ENCODE measurements at regions of chr9 and their contacts with region 1.

Region 1: GRCh38 chr9:37592108-37592951 is at the start of gene TOMM5:
- DNase-seq: peak; percentile 89
- H3K4me3 Mint-ChIP-seq: peak within 1 kb of the TSS; percentile 94
- H3K27ac Mint-ChIP-seq: peak within 1 kb of the TSS; percentile 96
- H3K4me1 Mint-ChIP-seq: peaks cover 29% of the 10 kb centered on the region
- H3K27me3 Mint-ChIP-seq: peaks cover 8% of the 10 kb centered on the region
- total RNA-seq, gene TOMM5: 174 and 175 TPM in 2 replicates

Region 2: DNA sequence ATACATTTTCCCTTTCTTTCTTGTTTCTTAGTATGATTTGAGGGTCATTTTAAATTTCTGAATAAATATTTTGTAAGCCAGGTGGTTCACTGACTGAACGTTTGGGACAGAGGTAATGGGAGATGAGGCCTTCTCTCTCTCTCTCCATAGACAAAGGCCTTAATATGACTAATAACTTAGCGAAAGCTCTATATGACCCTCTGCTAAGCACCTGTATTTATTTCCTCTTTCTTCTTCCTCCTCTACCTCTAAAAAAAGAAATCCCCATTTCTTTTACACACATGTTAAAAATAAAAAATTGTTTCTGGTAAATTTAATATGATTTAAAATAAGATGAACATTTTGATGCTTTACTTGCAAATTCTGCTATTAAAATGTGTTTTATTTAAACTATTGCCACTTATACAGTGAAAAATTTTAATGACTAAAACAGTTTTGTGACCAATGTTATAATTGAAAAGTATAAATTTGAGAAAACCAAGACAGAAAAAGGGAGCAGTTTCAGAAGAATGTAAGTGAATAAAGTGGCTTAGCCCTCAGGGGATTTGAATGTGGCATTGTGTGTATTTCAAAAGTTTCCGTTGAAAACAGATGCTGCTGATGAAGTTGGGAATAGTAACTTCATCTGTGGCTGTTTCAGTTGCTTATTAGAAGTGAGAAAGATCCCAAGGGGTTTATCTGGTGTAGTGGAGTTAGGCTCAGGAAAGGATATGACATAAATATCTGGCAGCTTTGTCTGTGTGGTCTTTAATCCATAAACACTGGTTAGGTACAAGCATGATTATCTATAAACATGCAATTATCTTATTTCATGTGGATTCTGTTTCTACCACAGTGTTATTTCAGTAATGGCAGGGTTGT is 298.4 kb before region 1 on chr9:
- intact Hi-C with region 1: no loop called
- DNase-seq: no peak
- H3K4me3 Mint-ChIP-seq: no peak overlapping the region
- H3K27ac Mint-ChIP-seq: no peak overlapping the region
- H3K4me1 Mint-ChIP-seq: peaks cover 43% of the 10 kb centered on the region
- H3K27me3 Mint-ChIP-seq: no peaks in the 10 kb centered on the region

Region 3: GRCh38 chr9:37415011-37415719 is 177.2 kb before region 1 on chr9:
- intact Hi-C with region 1: loop called (anchors 1 kb)
- DNase-seq: peak; percentile 69
- H3K4me3 Mint-ChIP-seq: peak overlapping the region; percentile 23
- H3K27ac Mint-ChIP-seq: no peak overlapping the region
- H3K4me1 Mint-ChIP-seq: peaks cover 12% of the 10 kb centered on the region
- H3K27me3 Mint-ChIP-seq: peaks cover 4% of the 10 kb centered on the region

Region 4: DNA sequence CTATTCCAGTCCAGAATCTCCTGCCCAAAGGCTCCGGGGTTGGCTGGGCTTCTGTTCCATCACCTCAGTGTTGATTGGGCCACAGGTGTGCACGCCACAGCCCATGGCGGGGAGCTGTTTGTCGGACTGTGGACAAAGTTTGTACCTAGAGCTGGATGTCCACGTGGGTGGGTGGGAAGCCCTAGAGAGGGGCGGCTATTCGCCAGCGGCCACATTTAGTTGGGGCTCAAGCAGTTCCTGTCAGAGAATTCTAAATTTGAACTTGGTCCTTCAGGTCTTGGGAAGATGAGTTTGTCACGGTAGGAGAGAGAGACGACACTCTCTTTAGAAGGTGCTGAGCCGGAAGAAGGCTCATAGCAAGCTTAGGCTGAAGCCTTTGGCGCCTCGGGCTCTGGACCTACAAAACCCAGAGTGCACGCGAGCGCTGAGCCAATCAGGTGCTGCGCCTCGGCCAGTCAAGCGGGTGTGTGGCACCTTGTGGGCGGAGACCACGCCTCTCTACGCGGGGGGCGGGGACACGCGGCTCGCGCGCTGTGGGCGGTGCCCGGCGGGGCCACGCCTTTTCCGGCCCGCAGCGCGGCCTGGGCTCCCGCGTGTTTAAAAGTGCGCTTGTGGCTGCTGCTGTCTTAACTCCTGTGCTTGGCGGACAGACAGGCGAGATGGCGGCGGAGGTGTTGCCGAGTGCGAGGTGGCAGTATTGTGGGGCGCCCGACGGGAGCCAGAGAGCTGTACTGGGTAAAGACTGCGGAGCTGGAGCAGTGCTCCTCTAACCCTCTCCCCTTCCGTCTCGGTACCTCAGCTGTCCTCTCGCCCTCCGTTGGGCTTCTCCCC is 106.7 kb before region 1 on chr9 and contains the start of gene POLR1E:
- intact Hi-C with region 1: loop called (anchors 1 kb)
- DNase-seq: peak; percentile 95
- H3K4me3 Mint-ChIP-seq: peak within 1 kb of the TSS; percentile 96
- H3K27ac Mint-ChIP-seq: peak within 1 kb of the TSS; percentile 92
- H3K4me1 Mint-ChIP-seq: peaks cover 31% of the 10 kb centered on the region
- H3K27me3 Mint-ChIP-seq: peaks cover 8% of the 10 kb centered on the region
- total RNA-seq, gene POLR1E: 59.8 and 61.0 TPM in 2 replicates

Region 5: DNA sequence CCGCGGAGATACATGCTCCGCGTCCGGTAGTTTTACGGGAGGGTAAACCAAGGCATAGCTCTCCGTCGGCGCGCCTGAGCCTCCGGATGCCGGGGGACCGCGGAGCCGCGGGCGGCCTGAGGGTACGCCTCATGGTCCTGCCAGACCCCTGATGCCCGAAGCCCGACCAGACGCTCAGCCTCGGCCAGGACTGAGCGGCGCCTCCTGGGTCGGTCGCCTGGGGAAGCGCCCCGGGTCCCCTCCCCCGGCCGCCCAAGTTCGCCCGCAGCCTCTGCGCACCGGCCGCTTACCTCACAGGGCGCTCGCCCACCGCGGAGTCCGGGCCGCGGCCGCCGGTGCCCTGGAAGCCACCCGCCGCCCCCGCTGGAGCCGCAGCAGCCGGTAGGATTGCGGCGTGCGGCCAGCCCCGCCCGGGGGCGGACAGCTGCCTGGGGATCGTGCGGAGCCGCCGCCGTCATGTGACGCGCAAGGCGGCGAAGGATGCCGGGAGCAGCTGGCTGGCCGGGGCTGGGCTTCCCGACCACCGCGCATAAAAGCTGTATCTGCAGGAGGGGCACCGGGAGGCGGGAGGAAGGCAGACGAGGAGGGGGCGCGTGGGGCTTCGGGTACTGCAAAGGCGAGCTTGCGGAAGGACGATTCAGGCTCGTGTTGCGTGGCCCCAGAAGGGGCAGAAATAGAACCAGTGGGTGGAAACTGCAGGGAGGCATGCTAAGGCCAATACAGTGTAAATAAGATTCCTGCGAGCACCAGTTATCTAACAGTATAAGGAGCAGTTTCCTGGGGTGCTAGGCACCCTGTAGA is 16.2 kb before region 1 on chr9 and contains the start of gene FBXO10:
- intact Hi-C with region 1: loop called (anchors 2 kb)
- DNase-seq: peak; percentile 55
- H3K4me3 Mint-ChIP-seq: peak within 1 kb of the TSS; percentile 81
- H3K27ac Mint-ChIP-seq: peak within 1 kb of the TSS; percentile 68
- H3K4me1 Mint-ChIP-seq: peaks cover 31% of the 10 kb centered on the region
- H3K27me3 Mint-ChIP-seq: peaks cover 9% of the 10 kb centered on the region
- total RNA-seq, gene FBXO10: 2.3 and 2.9 TPM in 2 replicates

Region 6: GRCh38 chr9:37617832-37618231 is 25.5 kb after region 1 on chr9:
- intact Hi-C with region 1: no loop called
- DNase-seq: no peak
- H3K4me3 Mint-ChIP-seq: no peak overlapping the region
- H3K27ac Mint-ChIP-seq: no peak overlapping the region
- H3K4me1 Mint-ChIP-seq: no peaks in the 10 kb centered on the region
- H3K27me3 Mint-ChIP-seq: peaks cover 4% of the 10 kb centered on the region

Region 7: DNA sequence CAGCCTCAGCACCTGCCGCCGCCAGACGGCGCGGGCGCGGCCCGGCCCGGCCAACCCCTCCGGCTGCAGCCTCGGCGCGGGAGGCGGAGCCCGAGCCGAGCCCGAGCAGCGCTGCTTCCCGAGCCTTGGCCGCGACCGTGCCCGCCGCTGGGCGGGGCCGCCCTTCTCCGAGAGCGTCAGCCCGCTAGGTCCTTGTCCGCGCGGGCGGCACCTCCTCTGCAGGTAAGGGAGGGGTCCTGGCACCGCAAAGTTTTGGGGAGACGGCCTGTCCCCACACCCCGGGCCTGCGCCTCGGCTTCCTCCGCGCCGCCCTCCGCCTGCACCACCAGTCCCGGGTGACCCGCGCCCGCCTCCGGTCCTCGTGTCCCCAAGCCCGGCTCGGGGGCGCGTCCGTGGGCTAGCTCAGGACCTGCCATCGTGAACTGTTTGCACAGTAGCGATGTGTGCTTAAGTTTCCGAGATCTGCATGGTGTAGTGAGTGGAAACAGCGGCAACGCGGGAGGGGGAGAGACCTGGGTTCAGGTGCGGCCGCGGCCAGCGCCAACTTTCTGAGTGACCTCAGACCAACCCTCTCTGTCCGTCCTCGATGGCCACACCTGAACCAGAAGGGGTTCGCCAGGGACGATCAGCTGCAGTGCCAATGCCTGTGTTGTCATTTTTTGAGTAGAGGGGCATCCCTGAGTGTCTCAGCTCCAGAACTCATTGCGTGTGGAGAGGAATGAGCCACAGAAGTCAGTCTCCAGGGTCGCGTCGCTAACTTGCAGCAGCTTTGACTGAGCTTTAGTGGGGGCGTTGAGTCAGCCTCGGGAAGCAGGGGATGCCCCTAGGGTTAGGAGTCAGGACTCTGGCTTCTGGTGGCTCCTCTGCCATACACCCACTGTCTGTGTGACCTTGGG is 58.8 kb after region 1 on chr9 and contains the start of gene FRMPD1:
- intact Hi-C with region 1: loop called (anchors 1 kb)
- DNase-seq: peak; percentile 51
- H3K4me3 Mint-ChIP-seq: peak within 1 kb of the TSS; percentile 79
- H3K27ac Mint-ChIP-seq: no peak within 1 kb of the TSS
- H3K4me1 Mint-ChIP-seq: peaks cover 5% of the 10 kb centered on the region
- H3K27me3 Mint-ChIP-seq: peaks cover 76% of the 10 kb centered on the region
- total RNA-seq, gene FRMPD1: 0.03 TPM in 1 of 2 replicates, not detected in the other

Region 8: DNA sequence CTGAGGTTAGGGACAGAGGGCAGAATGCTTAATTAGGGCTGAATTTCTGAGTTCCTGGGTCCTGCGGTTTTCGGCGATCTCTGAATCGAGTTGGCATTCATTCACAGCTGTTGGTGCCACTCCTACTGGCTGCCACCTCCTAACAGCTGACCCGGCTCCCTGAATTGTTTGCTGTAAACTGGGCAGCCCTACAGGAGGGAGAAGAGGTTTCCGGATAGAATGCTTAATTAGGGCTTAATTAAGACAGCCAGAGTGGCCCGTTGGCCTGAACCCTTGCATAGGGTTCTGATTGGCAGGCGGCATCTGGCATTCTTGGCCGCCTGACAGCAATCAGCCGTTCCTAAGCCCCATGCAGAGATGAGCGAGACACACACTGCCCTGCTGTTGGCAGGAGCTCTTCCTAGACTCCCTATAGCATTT is 84.1 kb after region 1 on chr9:
- intact Hi-C with region 1: no loop called
- DNase-seq: no peak
- H3K4me3 Mint-ChIP-seq: no peak overlapping the region
- H3K27ac Mint-ChIP-seq: no peak overlapping the region
- H3K4me1 Mint-ChIP-seq: no peaks in the 10 kb centered on the region
- H3K27me3 Mint-ChIP-seq: peaks cover 5% of the 10 kb centered on the region

Region 9: DNA sequence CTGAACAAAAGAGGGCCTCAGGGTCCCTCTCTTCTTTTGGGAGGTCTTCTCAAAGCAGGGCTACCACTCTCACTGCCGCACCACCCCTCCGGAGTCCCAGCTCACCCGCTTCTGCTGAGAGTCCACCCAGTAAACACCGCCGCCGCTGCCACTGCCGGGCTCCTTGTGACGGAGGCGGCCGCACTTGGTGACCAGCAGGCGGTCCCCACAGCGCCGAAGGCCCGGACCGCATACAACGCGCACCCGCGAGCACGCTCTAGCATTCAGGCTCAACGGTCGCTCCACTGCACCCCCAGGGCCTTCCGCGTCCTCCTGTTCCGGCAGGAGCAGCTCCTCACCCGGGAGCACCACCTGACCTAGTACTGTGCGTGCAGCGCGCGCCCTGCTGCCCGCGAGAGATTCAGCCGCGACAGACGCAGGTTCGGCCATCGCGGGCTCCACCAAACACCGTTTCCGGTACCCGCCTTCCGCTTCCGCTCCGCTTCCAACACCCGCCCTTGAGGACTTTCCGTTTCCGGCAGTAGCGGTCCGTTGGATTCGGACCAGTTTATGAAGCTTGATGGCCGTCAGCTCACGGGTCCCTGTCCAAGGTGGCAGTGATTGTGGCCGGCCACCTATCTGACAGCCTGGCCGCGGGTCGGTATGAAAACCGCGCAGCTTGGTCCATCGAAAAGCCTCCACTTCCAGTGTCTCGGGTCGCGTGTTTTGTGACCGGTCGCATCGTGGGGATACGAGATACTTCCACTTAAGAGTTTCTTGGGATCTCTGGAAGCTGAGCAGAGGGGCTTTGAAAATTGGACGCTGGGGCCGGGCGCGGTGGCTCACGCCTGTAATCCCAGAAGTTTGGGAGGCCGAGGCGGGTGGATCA is 192.5 kb after region 1 on chr9 and contains the start of gene EXOSC3:
- intact Hi-C with region 1: loop called (anchors 1 kb)
- DNase-seq: peak; percentile 85
- H3K4me3 Mint-ChIP-seq: peak within 1 kb of the TSS; percentile 99
- H3K27ac Mint-ChIP-seq: peak within 1 kb of the TSS; percentile 97
- H3K4me1 Mint-ChIP-seq: peaks cover 40% of the 10 kb centered on the region
- H3K27me3 Mint-ChIP-seq: no peaks in the 10 kb centered on the region
- total RNA-seq, gene EXOSC3: 94.8 and 116 TPM in 2 replicates

Measured in activated T-helper 1 cell treated with anti-CD3 and anti-CD28 coated beads, Interleukin-12 subunit alpha, Interleukin-12 subunit beta, Interleukin-2, Interleukin-4 antibody, amounts not matched to agents 30 ng/mL and 10 ng/mL and 1 ng/mL, durations not matched to agents 14 hours and 24 hours and 36 hours (primary cell).